Activated naive CD8-positive, alpha-beta T cell treated with anti-CD3 and anti-CD28 coated beads, Interleukin-2, amount 10 ng/mL, durations not matched to agents 7 days and 5 days (primary cell): ENCODE measurements at regions of chr1 and their contacts with region 1.

Region 1: GRCh38 chr1:40531381-40532061 is at the start of gene ZNF684:
- DNase-seq: peak; percentile 78
- ATAC-seq: peak; percentile 96
- H3K4me3 Mint-ChIP-seq: peak within 1 kb of the TSS; percentile 98
- H3K27ac Mint-ChIP-seq: peak within 1 kb of the TSS; percentile 93
- H3K4me1 Mint-ChIP-seq: peaks cover 17% of the 10 kb centered on the region
- H3K27me3 Mint-ChIP-seq: no peaks in the 10 kb centered on the region
- total RNA-seq, gene ZNF684: 7.1 to 7.2 TPM

Region 2: GRCh38 chr1:40421431-40422384 is 109.8 kb before region 1 on chr1:
- POLR2A ChIA-PET with region 1: no interaction called
- DNase-seq: no peak
- ATAC-seq: no peak
- H3K4me3 Mint-ChIP-seq: no peak overlapping the region
- H3K27ac Mint-ChIP-seq: no peak overlapping the region
- H3K4me1 Mint-ChIP-seq: peaks cover 9% of the 10 kb centered on the region
- H3K27me3 Mint-ChIP-seq: no peaks in the 10 kb centered on the region

Region 3: GRCh38 chr1:40449684-40450494 is 81.6 kb before region 1 on chr1 and contains the start of gene ZFP69B:
- POLR2A ChIA-PET with region 1: interaction called, 15 read pairs
- DNase-seq: peak; percentile 96
- ATAC-seq: peak; percentile 88
- H3K4me3 Mint-ChIP-seq: peak within 1 kb of the TSS; percentile 82
- H3K27ac Mint-ChIP-seq: peak within 1 kb of the TSS; percentile 90
- H3K4me1 Mint-ChIP-seq: peaks cover 23% of the 10 kb centered on the region
- H3K27me3 Mint-ChIP-seq: no peaks in the 10 kb centered on the region
- total RNA-seq, gene ZFP69B: 5.2 to 6.3 TPM

Region 4: GRCh38 chr1:40508375-40509341 is 22.9 kb before region 1 on chr1 and contains the start of gene EXO5:
- POLR2A ChIA-PET with region 1: interaction called, 20 read pairs
- DNase-seq: peak; percentile 91
- ATAC-seq: peak; percentile 98
- H3K4me3 Mint-ChIP-seq: peak within 1 kb of the TSS; percentile 95
- H3K27ac Mint-ChIP-seq: peak within 1 kb of the TSS; percentile 86
- H3K4me1 Mint-ChIP-seq: peaks cover 10% of the 10 kb centered on the region
- H3K27me3 Mint-ChIP-seq: no peaks in the 10 kb centered on the region
- total RNA-seq, gene EXO5: 14.6 to 19.4 TPM